ENCODE measurements at regions of chr10 and their contacts with region 1.

Region 1: DNA sequence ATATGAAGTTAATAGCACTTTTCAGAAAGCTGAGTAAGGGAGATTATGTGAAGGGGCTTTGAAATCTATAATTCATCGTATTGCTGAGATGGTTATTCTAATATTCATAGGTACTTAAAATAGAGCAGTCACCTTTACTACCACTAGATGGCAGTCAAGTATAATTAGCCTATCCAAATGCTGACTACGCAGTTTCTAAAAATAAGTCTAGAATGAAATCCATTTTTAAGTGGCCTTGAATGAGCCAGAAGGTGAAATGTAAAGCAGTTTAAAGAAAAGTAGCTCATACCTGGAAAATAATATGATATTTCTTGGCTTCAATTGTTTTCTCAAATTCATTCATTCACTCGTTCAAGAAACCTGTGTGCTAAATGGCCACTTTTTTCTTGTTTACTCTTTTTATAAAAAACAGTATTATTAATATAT is 1277.1 kb downstream of the GATA3 start:
- DNase-seq: peak; percentile 8
- ATAC-seq: no peak
- H3K4me3 ChIP-seq: no peak overlapping the region
- H3K27ac ChIP-seq: no peak overlapping the region
- H3K4me1 ChIP-seq: no peaks in the 10 kb centered on the region
- H3K27me3 ChIP-seq: no peaks in the 10 kb centered on the region
- CTCF ChIP-seq: peak; percentile 76

Region 2: GRCh38 chr10:11036407-11037011 is 1704.9 kb after region 1 on chr10:
- CTCF ChIA-PET with region 1: no interaction called
- POLR2A ChIA-PET with region 1: no interaction called
- in situ Hi-C with region 1: no loop called
- intact Hi-C with region 1: loop called (anchors 10 kb)
- DNase-seq: peak; percentile 15
- ATAC-seq: peak; percentile 78
- H3K4me3 ChIP-seq: no peak overlapping the region
- H3K27ac ChIP-seq: no peak overlapping the region
- H3K4me1 ChIP-seq: no peaks in the 10 kb centered on the region
- H3K27me3 ChIP-seq: no peaks in the 10 kb centered on the region
- CTCF ChIP-seq: peak; percentile 54

Measured in Panc1 (cell line).